ENCODE measurements at regions of chr9 and their contacts with region 1.

Region 1: DNA sequence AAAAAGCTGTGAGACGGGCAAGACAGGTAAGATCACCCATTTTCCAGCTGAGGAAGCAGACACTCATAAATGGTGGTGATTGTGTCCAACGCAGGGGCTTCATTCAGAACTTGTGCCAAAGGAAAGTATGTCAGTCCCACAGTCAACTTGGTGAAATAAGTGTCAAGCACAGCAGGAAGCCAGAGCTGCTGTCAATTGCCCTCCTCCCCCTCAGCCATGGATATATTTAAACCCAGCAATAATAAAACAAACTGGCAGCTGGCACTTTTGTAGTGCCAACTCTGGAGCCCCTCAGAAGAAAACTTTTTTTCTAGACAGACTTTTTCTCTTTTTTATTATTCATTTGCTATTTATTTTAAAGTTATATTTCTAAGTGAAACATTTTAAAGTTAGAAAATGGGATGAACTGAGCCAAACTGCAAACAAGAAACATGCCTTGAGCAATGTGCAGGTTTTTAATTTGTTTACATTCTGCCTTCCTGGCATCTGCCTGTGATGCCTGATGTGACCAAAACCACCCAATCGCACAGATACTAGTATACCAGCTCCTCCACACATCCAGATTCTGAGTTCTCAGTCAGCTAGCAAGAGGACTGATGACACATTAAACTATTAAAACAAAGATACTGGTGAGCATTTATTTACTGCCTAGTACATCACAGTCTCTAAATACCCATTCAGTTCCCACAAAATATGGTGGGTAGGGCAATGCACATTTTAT is 17.0 kb downstream of the DMAC1 start:
- DNase-seq: no peak
- ATAC-seq: no peak
- H3K4me3 ChIP-seq: no peak overlapping the region
- H3K27ac ChIP-seq: no peak overlapping the region
- H3K4me1 ChIP-seq: no peaks in the 10 kb centered on the region
- H3K27me3 ChIP-seq: no peaks in the 10 kb centered on the region
- CTCF ChIP-seq: no peak
- EP300 ChIP-seq: no peak
- POLR2A ChIP-seq: no peak
- RAD21 ChIP-seq: no peak

Region 2: DNA sequence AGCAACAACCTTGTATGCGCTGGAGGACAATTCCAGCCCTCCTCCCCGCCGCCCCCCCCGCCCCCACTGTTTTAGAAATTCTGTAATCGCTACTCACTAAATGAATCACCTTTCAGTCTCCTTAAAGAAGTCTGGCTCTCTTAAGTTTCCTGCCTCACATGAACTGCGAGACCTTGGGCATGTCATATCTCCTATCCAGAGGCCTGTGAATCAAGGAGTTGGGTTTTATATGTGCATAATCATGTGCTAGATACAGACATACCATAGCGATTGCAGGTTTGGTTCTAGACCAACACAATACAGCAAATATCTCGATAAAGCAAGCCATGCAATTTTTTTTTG is 17.4 kb after region 1 on chr9:
- CTCF ChIA-PET with region 1: no interaction called
- POLR2A ChIA-PET with region 1: no interaction called
- in situ Hi-C with region 1: no loop called
- intact Hi-C with region 1: loop called (anchors 1 kb)
- DNase-seq: no peak
- ATAC-seq: peak; percentile 50
- H3K4me3 ChIP-seq: peak overlapping the region; percentile 75; the same call in 1 of the 2 replicates
- H3K27ac ChIP-seq: no peak overlapping the region
- H3K4me1 ChIP-seq: no peaks in the 10 kb centered on the region; a peak in 1 of 5 replicates
- H3K27me3 ChIP-seq: no peaks in the 10 kb centered on the region
- CTCF ChIP-seq: no peak
- EP300 ChIP-seq: no peak
- POLR2A ChIP-seq: no peak
- RAD21 ChIP-seq: no peak